Dorsolateral prefrontal cortex (tissue), 120 donors: ENCODE measurements at regions of chr14 and their contacts with region 1.

Region 1: DNA sequence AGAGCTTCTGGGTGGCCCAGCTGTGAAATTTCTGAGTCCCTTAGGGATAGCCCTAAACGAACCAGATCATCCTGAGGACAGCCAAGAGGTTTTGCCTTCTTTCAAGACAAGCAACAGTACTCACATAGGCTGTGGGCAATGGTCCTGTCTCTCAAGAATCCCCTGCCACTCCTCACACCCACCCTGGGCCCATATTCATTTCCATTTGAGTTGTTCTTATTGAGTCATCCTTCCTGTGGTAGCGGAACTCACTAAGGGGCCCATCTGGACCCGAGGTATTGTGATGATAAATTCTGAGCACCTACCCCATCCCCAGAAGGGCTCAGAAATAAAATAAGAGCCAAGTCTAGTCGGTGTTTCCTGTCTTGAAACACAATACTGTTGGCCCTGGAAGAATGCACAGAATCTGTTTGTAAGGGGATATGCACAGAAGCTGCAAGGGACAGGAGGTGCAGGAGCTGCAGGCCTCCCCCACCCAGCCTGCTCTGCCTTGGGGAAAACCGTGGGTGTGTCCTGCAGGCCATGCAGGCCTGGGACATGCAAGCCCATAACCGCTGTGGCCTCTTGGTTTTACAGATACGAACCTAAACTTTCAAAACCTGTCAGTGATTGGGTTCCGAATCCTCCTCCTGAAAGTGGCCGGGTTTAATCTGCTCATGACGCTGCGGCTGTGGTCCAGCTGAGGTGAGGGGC is 38.9 kb downstream of the DAD1 start:
- DNase-seq: no peak
- H3K4me3 ChIP-seq: no peak overlapping the region
- H3K27ac ChIP-seq: peak overlapping the region in 1 of 59 donors; percentile 31
- H3K27me3 ChIP-seq: no peaks in the 10 kb centered on the region
- CTCF ChIP-seq: no peak

Region 2: GRCh38 chr14:22370084-22370847 is 179.9 kb before region 1 on chr14:
- intact Hi-C with region 1: no loop called
- DNase-seq: no peak
- H3K4me3 ChIP-seq: no peak overlapping the region
- H3K27ac ChIP-seq: peak overlapping the region in 1 of 59 donors; percentile 24
- H3K27me3 ChIP-seq: no peaks in the 10 kb centered on the region
- CTCF ChIP-seq: no peak

Region 3: DNA sequence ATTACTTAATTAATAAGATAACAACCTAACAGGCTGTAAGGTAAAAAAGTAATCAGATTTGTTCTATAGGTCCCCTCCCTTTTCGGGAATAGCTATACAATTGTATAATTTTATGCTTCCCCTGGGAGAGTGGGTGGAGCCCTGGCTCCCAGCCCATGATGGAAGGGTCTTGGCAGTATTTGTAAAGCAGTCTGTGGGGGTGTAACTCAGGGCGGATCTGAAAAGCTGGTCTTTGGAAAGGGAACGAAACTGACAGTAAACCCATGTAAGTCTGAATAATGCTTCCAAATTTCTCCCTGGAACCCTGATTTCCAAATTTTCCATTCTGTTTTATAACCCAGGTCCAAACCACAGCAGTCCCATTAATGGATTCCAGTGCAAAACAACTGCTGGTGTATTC is 71.5 kb before region 1 on chr14:
- intact Hi-C with region 1: loop called in 1 of 2 experiments (anchors 5 kb)
- DNase-seq: no peak
- H3K4me3 ChIP-seq: no peak overlapping the region
- H3K27ac ChIP-seq: no peak overlapping the region
- H3K27me3 ChIP-seq: peaks cover 0 to 29% (median 4%) of the 10 kb centered on the region in 45 donors
- CTCF ChIP-seq: no peak